Naive thymus-derived CD4-positive, alpha-beta T cell (primary cell): ENCODE measurements at regions of chr11 and their contacts with region 1.

Region 1: GRCh38 chr11:65540297-65541092 is 15.6 kb downstream of the SCYL1 start:
- DNase-seq: peak; percentile 84 to 95 (median 91)
- ATAC-seq: peak; percentile 94
- H3K4me3 ChIP-seq: peak overlapping the region; percentile 71
- H3K4me3 Mint-ChIP-seq: peak overlapping the region; percentile 81 to 90 (median 84)
- H3K27ac ChIP-seq: peak overlapping the region; percentile 74
- H3K27ac Mint-ChIP-seq: peak overlapping the region in 8 of 9 donors; percentile 70 to 92 (median 86)
- H3K4me1 ChIP-seq: peaks cover 12 to 18% of the 10 kb centered on the region in 2 donors
- H3K4me1 Mint-ChIP-seq: peaks cover 13 to 32% (median 22%) of the 10 kb centered on the region in 7 donors
- H3K27me3 ChIP-seq: no peaks in the 10 kb centered on the region
- H3K27me3 Mint-ChIP-seq: no peaks in the 10 kb centered on the region

Region 2: GRCh38 chr11:65366340-65366773 is 174.1 kb before region 1 on chr11:
- CTCF ChIA-PET with region 1: no interaction called
- POLR2A ChIA-PET with region 1: no interaction called
- intact Hi-C with region 1: loop called in 1 of 2 experiments (anchors 1 kb)
- DNase-seq: peak in 7 of 9 donors; percentile 47 to 71 (median 59)
- ATAC-seq: peak; percentile 82
- H3K4me3 ChIP-seq: no peak overlapping the region
- H3K4me3 Mint-ChIP-seq: no peak overlapping the region
- H3K27ac ChIP-seq: no peak overlapping the region
- H3K27ac Mint-ChIP-seq: no peak overlapping the region
- H3K4me1 ChIP-seq: no peaks in the 10 kb centered on the region
- H3K4me1 Mint-ChIP-seq: peaks cover 0 to 9% (median 0%) of the 10 kb centered on the region in 7 donors
- H3K27me3 ChIP-seq: no peaks in the 10 kb centered on the region
- H3K27me3 Mint-ChIP-seq: no peaks in the 10 kb centered on the region

Region 3: DNA sequence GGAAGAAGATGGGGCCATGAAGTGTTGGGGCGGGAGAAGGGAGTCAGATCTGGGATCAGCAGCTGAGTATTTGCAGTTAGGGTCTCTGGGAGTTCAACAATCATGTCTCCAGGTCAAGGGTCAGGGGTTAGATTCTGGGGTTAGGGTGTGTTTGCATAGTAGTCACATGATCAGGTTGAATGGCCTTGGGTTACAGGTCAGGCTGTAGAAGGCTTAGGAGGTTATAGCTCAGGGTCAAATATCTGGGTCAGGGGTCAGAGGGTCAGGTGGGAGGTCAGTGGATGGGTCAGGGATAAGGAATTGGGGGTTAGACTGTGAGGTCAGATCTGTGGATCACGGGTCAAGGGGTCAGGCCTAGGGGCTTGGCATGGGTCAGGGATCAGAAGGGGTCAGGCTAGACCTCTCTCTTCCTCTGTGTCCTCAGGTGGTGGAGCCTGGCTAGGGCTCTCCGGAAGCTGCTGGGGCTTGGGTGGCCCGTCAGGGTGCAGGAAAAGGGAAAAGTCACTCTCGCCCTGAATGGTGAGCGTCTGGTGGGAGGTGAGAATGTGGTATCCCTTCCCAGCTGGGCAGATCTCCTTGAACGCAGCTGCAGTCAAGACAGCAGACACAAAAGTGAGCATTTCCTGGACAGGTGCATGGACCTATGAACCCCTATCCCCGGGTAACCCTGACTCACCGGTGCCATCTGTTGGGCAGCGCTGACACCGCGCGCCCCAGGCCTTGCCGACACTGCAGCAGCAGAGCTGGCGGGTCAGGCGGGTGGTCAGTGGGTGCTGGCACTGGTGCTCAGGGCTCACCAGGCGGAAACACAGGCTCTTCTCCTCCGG is 11.3 kb after region 1 on chr11:
- CTCF ChIA-PET with region 1: interaction called, 32 read pairs
- POLR2A ChIA-PET with region 1: interaction called, 39 read pairs
- intact Hi-C with region 1: loop called (anchors 1 kb)
- DNase-seq: peak in 6 of 9 donors; percentile 51 to 62 (median 56)
- ATAC-seq: peak; percentile 53
- H3K4me3 ChIP-seq: no peak overlapping the region
- H3K4me3 Mint-ChIP-seq: peak overlapping the region; percentile 18 to 98 (median 74)
- H3K27ac ChIP-seq: peak overlapping the region; percentile 31
- H3K27ac Mint-ChIP-seq: peak overlapping the region; percentile 71 to 93 (median 87)
- H3K4me1 ChIP-seq: peaks cover 35 to 78% of the 10 kb centered on the region in 2 donors
- H3K4me1 Mint-ChIP-seq: peaks cover 50 to 86% (median 74%) of the 10 kb centered on the region in 7 donors
- H3K27me3 ChIP-seq: no peaks in the 10 kb centered on the region
- H3K27me3 Mint-ChIP-seq: no peaks in the 10 kb centered on the region

Region 4: DNA sequence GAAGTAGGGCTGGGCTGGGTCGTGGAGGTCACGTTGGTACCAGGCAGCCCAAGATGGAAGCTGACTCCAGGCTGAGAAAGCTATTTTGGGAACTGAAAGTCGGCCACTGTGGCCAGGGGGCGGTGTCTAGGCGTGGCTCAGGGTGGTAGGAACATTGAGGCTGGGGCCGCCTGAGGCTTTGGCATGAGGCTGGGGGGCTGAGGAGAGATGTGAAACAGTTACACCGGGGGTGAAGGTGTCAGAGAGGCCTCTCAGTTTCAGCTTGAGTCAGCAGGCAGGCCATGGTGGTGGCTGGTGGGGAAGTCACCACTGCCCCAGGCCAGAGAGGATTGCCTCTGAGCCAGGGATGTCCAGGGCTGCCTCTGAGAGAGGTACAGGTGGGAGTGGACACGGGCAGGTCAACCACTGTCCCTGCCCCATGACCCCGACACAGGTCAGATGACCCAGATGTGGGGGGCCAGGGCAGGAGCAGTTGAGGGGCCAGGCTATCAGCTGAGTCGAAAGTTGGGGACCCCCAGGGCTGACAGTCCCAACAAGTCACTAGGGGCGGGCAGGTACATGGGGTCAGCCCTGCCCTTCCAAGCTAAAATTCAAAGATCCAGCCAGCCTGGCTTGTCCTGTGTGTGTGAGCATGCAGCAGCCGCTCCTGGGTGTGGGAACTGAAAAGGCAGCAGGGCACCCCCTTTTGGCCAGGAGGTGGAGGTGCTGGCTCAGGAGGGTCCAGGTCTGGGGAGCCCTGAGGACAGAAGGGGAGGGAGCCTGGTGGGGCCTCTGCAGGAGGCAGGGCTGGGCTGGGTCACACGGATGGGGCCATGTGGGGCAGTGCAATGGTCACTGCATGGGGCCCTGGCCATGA is 47.9 kb after region 1 on chr11:
- CTCF ChIA-PET with region 1: interaction called, 126 read pairs
- POLR2A ChIA-PET with region 1: interaction called, 66 read pairs
- intact Hi-C with region 1: loop called (anchors 1 kb)
- DNase-seq: peak; percentile 35 to 83 (median 75)
- ATAC-seq: peak; percentile 91
- H3K4me3 ChIP-seq: no peak overlapping the region
- H3K4me3 Mint-ChIP-seq: peak overlapping the region in 1 of 10 donors; percentile 76
- H3K27ac ChIP-seq: peak overlapping the region; percentile 43
- H3K27ac Mint-ChIP-seq: peak overlapping the region; percentile 38 to 86 (median 76)
- H3K4me1 ChIP-seq: peaks cover 11 to 16% of the 10 kb centered on the region in 2 donors
- H3K4me1 Mint-ChIP-seq: peaks cover 16 to 43% (median 21%) of the 10 kb centered on the region in 7 donors
- H3K27me3 ChIP-seq: no peaks in the 10 kb centered on the region
- H3K27me3 Mint-ChIP-seq: no peaks in the 10 kb centered on the region

Region 5: DNA sequence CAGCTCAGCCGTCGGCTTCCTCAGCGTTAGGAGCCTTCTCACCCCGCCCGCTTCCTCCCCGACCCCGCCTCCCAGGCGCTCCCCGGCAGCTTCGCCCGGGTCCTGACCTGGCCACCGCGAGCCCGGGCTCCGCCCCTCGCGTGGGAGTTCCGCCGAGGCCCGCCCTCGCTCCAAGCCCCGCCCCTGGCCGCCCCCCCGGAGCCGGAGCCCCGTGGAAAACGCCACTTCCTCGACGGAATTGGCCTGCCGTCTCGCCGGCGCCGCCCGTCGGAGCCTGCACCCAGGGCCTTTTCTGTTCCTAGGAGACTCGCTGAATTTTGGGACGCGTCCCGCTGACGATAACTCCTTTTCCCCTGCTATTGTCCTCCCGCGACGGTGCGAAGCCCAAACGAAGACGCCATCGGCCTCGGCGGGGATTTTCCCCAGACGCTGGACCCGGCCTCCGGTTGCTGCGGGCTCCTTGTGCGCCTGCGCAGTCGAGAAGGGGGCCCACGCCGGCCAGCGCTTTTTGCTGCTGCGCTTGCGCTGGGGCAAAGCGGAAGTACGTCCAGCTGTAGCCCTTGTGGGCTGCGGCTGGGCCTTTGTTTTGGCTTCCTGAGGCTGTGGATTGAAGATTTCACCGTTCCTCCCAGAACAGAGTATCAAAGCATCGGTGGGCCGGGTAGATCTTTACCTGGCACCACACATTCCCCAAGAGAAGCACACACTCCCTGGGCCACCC is 112.2 kb after region 1 on chr11:
- CTCF ChIA-PET with region 1: no interaction called
- POLR2A ChIA-PET with region 1: no interaction called
- intact Hi-C with region 1: loop called in 1 of 2 experiments (anchors 2 kb)
- DNase-seq: peak; percentile 91 to 99 (median 95)
- ATAC-seq: peak; percentile 92
- H3K4me3 ChIP-seq: peak overlapping the region; percentile 58
- H3K4me3 Mint-ChIP-seq: peak overlapping the region; percentile 70 to 95 (median 90)
- H3K27ac ChIP-seq: peak overlapping the region; percentile 98
- H3K27ac Mint-ChIP-seq: peak overlapping the region; percentile 90 to 99 (median 98)
- H3K4me1 ChIP-seq: peaks cover 25% of the 10 kb centered on the region in 2 donors
- H3K4me1 Mint-ChIP-seq: peaks cover 36 to 59% (median 51%) of the 10 kb centered on the region in 7 donors
- H3K27me3 ChIP-seq: no peaks in the 10 kb centered on the region
- H3K27me3 Mint-ChIP-seq: no peaks in the 10 kb centered on the region